Uterus (tissue), 4 donors: ENCODE measurements at regions of chr11 and their contacts with region 1.

Region 1: GRCh38 chr11:75532200-75533048 is 6.7 kb upstream of the GDPD5 start:
- DNase-seq: peak; percentile 71
- H3K4me3 ChIP-seq: no peak overlapping the region
- H3K27ac ChIP-seq: no peak overlapping the region
- H3K4me1 ChIP-seq: no peaks in the 10 kb centered on the region
- H3K27me3 ChIP-seq: no peaks in the 10 kb centered on the region
- CTCF ChIP-seq: peak; percentile 90 to 99 (median 94)
- POLR2A ChIP-seq: no peak

Region 2: DNA sequence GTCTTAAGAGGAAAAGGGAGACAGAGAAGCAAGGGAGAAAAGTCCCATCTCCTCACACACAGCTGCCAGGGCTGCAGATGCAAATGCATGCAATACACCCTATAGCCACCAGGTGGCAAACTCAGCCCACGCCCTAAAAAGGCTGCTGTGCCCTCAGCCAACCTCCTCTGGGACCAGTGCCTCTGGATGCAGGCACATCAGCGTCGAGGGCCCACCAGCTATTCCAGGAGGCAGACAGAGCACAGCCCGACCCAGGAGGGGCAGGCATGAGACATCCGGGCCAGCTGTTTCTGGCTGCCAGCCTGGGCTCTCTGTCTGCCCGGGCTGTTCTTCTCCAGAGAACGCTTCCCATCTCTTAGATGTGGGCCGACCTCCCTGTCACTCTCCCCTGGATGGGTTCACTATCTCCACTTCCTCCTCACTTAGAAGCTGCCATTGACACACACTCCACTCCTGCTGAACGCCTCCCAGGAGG is 252.2 kb before region 1 on chr11:
- intact Hi-C with region 1: loop called (anchors 10 kb)
- DNase-seq: peak; percentile 78 to 79
- H3K4me3 ChIP-seq: no peak overlapping the region
- H3K27ac ChIP-seq: no peak overlapping the region
- H3K4me1 ChIP-seq: peaks cover 0 to 4% of the 10 kb centered on the region in 2 donors
- H3K27me3 ChIP-seq: no peaks in the 10 kb centered on the region
- CTCF ChIP-seq: peak; percentile 95 to 99 (median 96)
- POLR2A ChIP-seq: no peak

Region 3: GRCh38 chr11:75394085-75394840 is 138.2 kb before region 1 on chr11:
- intact Hi-C with region 1: loop called (anchors 5 kb)
- DNase-seq: no peak
- H3K4me3 ChIP-seq: no peak overlapping the region
- H3K27ac ChIP-seq: no peak overlapping the region
- H3K4me1 ChIP-seq: no peaks in the 10 kb centered on the region
- H3K27me3 ChIP-seq: no peaks in the 10 kb centered on the region
- CTCF ChIP-seq: no peak
- POLR2A ChIP-seq: no peak

Region 4: GRCh38 chr11:75445315-75445953 is 87.0 kb before region 1 on chr11:
- intact Hi-C with region 1: loop called (anchors 2 kb)
- DNase-seq: peak; percentile 75 to 77
- H3K4me3 ChIP-seq: no peak overlapping the region
- H3K27ac ChIP-seq: no peak overlapping the region
- H3K4me1 ChIP-seq: no peaks in the 10 kb centered on the region
- H3K27me3 ChIP-seq: no peaks in the 10 kb centered on the region
- CTCF ChIP-seq: peak; percentile 93 to 99 (median 97)
- POLR2A ChIP-seq: no peak